OCI-LY7 (cell line): ENCODE measurements at regions of chr12 and their contacts with region 1.

Region 1: GRCh38 chr12:76083904-76084862 is at the start of gene NAP1L1:
- DNase-seq: peak; percentile 99
- H3K4me3 ChIP-seq: peak within 1 kb of the TSS; percentile 90
- H3K27ac ChIP-seq: peak within 1 kb of the TSS; percentile 88
- H3K4me1 ChIP-seq: peaks cover 44% of the 10 kb centered on the region
- CTCF ChIP-seq: no peak
- total RNA-seq, gene NAP1L1: 348 and 487 TPM in 2 replicates

Region 2: DNA sequence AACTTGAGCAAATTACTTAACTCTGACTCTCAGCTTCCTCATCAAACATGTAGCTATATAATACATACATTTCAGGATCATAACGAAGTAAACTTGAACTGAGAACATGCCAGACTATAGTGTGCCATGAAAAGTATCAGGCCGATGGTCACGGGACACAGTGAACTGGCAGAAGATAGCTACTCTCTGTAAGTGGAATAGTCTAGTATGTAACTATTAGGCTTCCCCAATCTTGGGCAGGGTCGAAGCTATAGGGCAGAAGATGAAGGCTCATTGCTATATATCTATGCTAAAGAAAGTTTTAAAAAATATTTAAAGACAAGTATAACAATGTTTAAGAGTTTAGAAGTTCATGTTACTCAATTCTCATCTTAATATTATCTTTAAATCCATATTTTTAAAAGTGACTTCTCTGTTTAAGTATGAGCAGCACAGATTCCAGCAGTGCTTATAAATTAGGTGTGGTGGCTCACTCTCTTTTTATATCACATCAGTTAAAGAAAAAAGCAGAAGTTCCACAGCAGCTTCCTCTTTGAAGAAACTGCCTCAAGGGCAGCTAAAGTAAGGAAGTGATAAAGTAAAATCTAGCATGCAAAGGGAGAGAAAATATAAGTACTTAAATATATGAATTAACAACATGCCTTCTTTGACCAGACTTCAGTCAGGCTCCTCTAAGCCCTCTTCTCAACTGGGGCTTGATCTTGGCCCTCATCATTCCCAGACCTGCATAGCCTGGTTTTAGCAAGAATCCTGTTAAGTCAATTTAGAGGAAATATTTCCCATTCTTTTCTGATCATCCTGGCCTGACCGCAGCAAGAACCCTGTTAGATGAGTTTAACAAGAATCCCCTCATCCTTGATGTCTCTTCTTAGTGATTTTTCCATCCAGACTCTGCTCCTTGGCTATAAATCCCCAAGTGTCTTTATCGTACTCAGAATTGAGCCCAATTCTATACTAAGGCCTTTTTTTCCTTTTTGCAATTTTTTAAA is 612.0 kb before region 1 on chr12:
- CTCF ChIA-PET with region 1: no interaction called
- POLR2A ChIA-PET with region 1: interaction called, 10 read pairs
- intact Hi-C with region 1: no loop called
- DNase-seq: peak; percentile 88
- H3K4me3 ChIP-seq: peak overlapping the region; percentile 15
- H3K27ac ChIP-seq: peak overlapping the region; percentile 76
- H3K4me1 ChIP-seq: peaks cover 28% of the 10 kb centered on the region
- CTCF ChIP-seq: no peak

Region 3: GRCh38 chr12:75511116-75512048 is 572.8 kb before region 1 on chr12 and contains the start of gene KRR1:
- CTCF ChIA-PET with region 1: no interaction called
- POLR2A ChIA-PET with region 1: no interaction called
- intact Hi-C with region 1: loop called (anchors 2 kb)
- DNase-seq: peak; percentile 96
- H3K4me3 ChIP-seq: peak within 1 kb of the TSS; percentile 97
- H3K27ac ChIP-seq: peak within 1 kb of the TSS; percentile 62
- H3K4me1 ChIP-seq: peaks cover 22% of the 10 kb centered on the region
- CTCF ChIP-seq: no peak
- total RNA-seq, gene KRR1: 27.6 and 44.0 TPM in 2 replicates

Region 4: GRCh38 chr12:76064904-76065303 is 19.3 kb before region 1 on chr12:
- CTCF ChIA-PET with region 1: no interaction called
- POLR2A ChIA-PET with region 1: interaction called, 16 read pairs
- intact Hi-C with region 1: no loop called
- DNase-seq: no peak
- H3K4me3 ChIP-seq: no peak overlapping the region
- H3K27ac ChIP-seq: no peak overlapping the region
- H3K4me1 ChIP-seq: no peaks in the 10 kb centered on the region
- CTCF ChIP-seq: no peak

Region 5: GRCh38 chr12:76109879-76110278 is 25.7 kb after region 1 on chr12:
- CTCF ChIA-PET with region 1: no interaction called
- POLR2A ChIA-PET with region 1: no interaction called
- intact Hi-C with region 1: no loop called
- DNase-seq: no peak
- H3K4me3 ChIP-seq: no peak overlapping the region
- H3K27ac ChIP-seq: no peak overlapping the region
- H3K4me1 ChIP-seq: no peaks in the 10 kb centered on the region
- CTCF ChIP-seq: no peak

Region 6: DNA sequence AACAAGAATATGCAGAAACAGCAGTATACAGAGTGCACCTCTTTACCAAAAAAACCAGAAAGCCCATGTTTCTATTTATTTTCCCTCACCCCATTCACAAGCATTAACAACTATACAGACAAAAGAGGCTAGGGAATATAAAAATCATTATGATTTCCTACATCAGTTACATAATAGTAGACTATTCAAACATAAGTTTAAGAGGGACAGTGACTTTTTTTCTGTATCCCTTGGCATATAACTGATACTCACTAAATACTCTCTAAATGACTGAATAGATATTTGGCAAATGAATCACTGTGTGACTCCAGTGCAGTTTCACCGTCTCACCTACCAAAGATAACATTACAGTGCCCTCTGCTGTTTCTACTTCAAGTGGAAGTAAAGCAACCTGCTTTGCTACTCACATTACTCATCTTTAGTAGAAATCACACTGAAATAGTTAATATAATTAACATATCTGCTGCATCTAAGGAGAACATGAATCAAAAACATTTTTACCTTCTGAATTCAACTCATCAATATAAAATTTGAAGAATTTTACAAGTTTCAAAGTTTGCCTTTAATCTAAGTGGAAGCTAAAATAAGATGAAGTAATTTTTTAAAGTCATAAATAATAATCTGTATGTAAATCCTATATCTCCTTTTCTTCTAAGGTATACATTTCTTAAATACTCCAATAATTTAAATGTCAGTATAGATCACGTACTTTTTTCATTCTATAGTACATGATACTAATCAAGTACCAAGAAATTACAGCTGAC is 371.6 kb after region 1 on chr12:
- CTCF ChIA-PET with region 1: no interaction called
- POLR2A ChIA-PET with region 1: no interaction called
- intact Hi-C with region 1: loop called (anchors 10 kb)
- DNase-seq: peak; percentile 60
- H3K4me3 ChIP-seq: no peak overlapping the region
- H3K27ac ChIP-seq: no peak overlapping the region
- H3K4me1 ChIP-seq: peaks cover 7% of the 10 kb centered on the region
- CTCF ChIP-seq: peak; percentile 86

Region 7: GRCh38 chr12:76559400-76560085 is 475.4 kb after region 1 on chr12 and contains the start of gene OSBPL8:
- CTCF ChIA-PET with region 1: no interaction called
- POLR2A ChIA-PET with region 1: interaction called, 4 read pairs
- intact Hi-C with region 1: loop called (anchors 1 kb)
- DNase-seq: peak; percentile 93
- H3K4me3 ChIP-seq: peak within 1 kb of the TSS; percentile 100
- H3K27ac ChIP-seq: peak within 1 kb of the TSS; percentile 66
- H3K4me1 ChIP-seq: peaks cover 40% of the 10 kb centered on the region
- CTCF ChIP-seq: peak; percentile 38; the same call in 1 of the 2 replicates
- total RNA-seq, gene OSBPL8: 25.0 and 34.0 TPM in 2 replicates

Region 8: DNA sequence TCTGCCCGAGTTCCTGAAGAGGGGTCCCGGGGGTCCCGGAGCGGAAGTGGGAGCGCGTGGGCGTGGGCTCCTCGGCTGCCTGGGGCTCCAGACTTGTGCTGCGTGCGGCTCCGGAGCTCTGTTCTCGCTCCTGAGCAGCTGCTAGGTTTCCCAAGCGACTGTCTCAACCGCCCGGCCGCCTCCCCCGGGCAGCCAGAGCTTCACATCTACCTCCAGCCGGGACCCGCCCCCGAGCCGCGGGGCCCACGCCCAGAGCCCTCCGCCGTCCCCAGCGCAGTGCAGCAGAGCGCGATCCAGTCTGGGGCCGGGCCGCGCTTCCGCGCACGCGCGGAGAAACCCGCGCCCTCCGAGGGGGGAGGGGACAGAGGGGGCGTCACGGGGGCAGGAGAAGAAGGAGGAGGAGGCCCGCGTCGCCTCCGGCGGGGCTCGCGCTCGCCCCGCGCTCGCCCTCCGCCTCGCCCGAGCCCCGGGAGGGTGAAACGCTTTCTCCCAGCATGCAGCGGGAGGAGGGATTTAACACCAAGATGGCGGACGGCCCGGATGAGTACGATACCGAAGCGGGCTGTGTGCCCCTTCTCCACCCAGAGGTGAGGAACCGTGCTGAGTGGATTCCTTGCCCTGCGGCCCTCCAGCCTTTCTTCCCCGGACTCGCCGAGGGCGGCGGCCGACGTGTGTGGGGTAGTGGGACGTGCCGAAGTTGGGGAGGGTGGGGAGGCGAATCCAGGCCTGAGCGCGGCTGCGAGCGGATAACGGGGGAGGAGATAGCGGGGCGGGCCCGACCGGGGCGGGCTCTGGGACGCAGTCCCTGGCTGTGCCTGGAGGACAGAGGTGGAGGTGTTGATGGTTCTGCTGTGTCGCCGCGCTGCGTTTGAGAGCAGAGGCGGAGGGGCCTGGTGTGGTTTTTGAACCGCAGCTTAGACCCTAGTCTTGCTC is 679.8 kb after region 1 on chr12 and contains the start of gene ZDHHC17:
- CTCF ChIA-PET with region 1: no interaction called
- POLR2A ChIA-PET with region 1: no interaction called
- intact Hi-C with region 1: loop called (anchors 2 kb)
- DNase-seq: peak; percentile 91
- H3K4me3 ChIP-seq: peak within 1 kb of the TSS; percentile 94
- H3K27ac ChIP-seq: peak within 1 kb of the TSS; percentile 77
- H3K4me1 ChIP-seq: peaks cover 17% of the 10 kb centered on the region
- CTCF ChIP-seq: no peak
- total RNA-seq, gene ZDHHC17: 24.0 and 27.4 TPM in 2 replicates